Dorsolateral prefrontal cortex (tissue), 120 donors: ENCODE measurements at regions of chr2 and their contacts with region 1.

Region 1: DNA sequence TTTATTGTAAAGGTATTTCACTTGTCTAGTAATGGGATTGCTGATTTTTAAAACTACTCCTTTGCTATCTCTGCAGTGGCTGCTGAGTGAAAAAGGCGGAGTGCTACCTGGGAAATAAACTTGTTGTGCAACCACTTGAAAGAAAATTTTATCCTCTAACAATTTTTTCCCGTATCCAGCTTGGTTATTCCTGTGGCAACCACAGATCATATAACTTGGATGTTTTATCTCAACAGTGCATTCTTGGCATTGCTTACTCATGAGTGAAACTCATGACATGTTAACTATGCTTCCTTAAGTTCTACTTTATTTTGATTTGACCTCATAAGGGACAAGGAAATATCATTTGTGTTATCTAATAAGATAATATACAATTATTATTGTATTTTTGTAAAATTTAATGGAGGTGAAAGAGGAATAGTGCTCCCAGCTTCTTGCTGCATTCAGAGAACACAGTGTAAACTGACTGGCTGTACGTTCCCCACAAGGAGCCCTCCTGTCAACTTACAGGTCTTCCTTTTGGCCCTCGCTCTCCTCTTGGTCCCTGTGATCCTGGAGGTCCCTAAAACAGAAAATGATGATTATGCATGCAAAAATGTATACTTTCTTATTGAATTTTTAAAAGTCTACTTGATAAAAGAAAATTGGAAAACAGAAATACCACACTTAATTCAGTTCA is 82.7 kb downstream of the COL5A2 start:
- DNase-seq: no peak
- H3K4me3 ChIP-seq: no peak overlapping the region
- H3K27ac ChIP-seq: no peak overlapping the region
- H3K27me3 ChIP-seq: no peaks in the 10 kb centered on the region
- CTCF ChIP-seq: no peak

Region 2: GRCh38 chr2:189412330-189412953 is 315.5 kb after region 1 on chr2:
- intact Hi-C with region 1: loop called (anchors 5 to 10 kb)
- DNase-seq: peak in 2 of 10 donors; percentile 8 to 9
- H3K4me3 ChIP-seq: no peak overlapping the region
- H3K27ac ChIP-seq: peak overlapping the region in 3 of 59 donors; percentile 8 to 32 (median 31)
- H3K27me3 ChIP-seq: no peaks in the 10 kb centered on the region
- CTCF ChIP-seq: peak; percentile 68 to 97 (median 84)